ENCODE measurements at regions of chr1 and their contacts with region 1.

Region 1: GRCh38 chr1:147627435-147628110 is 42.8 kb downstream of the ACP6 start:
- DNase-seq: peak; percentile 75
- ATAC-seq: peak; percentile 80 to 84
- H3K4me3 ChIP-seq: no peak overlapping the region
- H3K27ac ChIP-seq: no peak overlapping the region
- H3K4me1 ChIP-seq: no peaks in the 10 kb centered on the region
- H3K27me3 ChIP-seq: no peaks in the 10 kb centered on the region
- CTCF ChIP-seq: peak; percentile 93

Region 2: GRCh38 chr1:147504801-147505311 is 122.7 kb before region 1 on chr1:
- intact Hi-C with region 1: loop called (anchors 10 kb)
- DNase-seq: no peak
- ATAC-seq: peak in 1 of 2 donors; percentile 51
- H3K4me3 ChIP-seq: no peak overlapping the region
- H3K27ac ChIP-seq: no peak overlapping the region
- H3K4me1 ChIP-seq: no peaks in the 10 kb centered on the region
- H3K27me3 ChIP-seq: no peaks in the 10 kb centered on the region
- CTCF ChIP-seq: no peak